Dendritic cell treated with granulocyte-macrophage colony-stimulating factor and Interleukin-4, amounts not matched to agents 40 ng/mL and 50 ng/mL, for 4 days (primary cell): ENCODE measurements at regions of chr9 and their contacts with region 1.

Region 1: GRCh38 chr9:21326526-21327139 is 8.6 kb downstream of the KLHL9 start:
- H3K4me3 Mint-ChIP-seq: no peak overlapping the region
- H3K27ac Mint-ChIP-seq: no peak overlapping the region
- H3K4me1 Mint-ChIP-seq: peaks cover 43% of the 10 kb centered on the region
- H3K27me3 Mint-ChIP-seq: no peaks in the 10 kb centered on the region

Region 2: GRCh38 chr9:21205204-21205603 is 121.4 kb before region 1 on chr9:
- intact Hi-C with region 1: loop called (anchors 10 kb)
- H3K4me3 Mint-ChIP-seq: no peak overlapping the region
- H3K27ac Mint-ChIP-seq: no peak overlapping the region
- H3K4me1 Mint-ChIP-seq: peaks cover 8% of the 10 kb centered on the region
- H3K27me3 Mint-ChIP-seq: peaks cover 18% of the 10 kb centered on the region

Region 3: DNA sequence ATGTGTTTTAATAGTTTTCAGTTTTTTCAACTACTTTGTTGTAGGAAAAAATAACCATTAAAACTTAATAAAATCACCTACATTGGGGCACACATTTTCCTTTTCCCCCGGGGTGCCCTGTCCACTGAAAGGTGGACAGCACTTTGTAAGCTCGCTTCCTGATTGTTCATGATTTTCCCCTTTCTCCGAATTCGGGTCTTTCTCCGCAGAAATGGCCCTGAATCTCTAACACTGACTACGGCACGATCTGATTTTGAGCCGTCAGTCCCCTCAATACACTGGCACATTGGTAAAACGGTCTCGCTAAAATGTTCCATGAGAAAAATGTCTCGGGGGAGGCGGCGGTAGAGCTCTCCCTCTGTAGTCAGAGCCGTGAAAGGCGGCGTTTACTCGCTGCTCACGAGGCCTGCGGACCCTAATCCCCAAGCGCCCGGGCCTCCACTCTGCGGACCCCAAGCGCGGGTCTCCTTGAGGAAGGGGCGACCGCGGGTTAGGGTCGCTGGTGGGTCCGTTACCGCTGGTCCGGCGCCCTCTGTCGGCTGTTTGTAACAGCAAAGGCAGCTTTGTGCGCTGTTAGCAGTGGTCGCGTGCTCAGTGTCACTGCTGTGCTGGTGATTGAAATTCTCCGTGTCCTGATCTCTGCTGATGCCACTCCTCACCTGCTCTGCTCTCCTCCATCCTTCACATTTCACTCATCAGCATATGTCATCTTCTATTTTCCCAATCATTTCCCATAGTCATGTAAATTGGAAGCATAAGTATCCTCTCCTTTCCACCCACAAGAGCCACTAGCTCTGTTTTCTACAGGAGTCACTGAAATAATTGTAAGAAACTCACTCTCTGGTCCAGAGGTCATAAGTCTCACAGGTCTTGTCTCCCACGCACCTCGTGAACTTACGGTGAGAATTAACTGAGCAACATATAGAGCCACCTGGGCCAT is 69.4 kb after region 1 on chr9:
- intact Hi-C with region 1: loop called (anchors 1 kb)
- H3K4me3 Mint-ChIP-seq: peak overlapping the region; percentile 68
- H3K27ac Mint-ChIP-seq: no peak overlapping the region
- H3K4me1 Mint-ChIP-seq: peaks cover 10% of the 10 kb centered on the region
- H3K27me3 Mint-ChIP-seq: peaks cover 71% of the 10 kb centered on the region

Region 4: DNA sequence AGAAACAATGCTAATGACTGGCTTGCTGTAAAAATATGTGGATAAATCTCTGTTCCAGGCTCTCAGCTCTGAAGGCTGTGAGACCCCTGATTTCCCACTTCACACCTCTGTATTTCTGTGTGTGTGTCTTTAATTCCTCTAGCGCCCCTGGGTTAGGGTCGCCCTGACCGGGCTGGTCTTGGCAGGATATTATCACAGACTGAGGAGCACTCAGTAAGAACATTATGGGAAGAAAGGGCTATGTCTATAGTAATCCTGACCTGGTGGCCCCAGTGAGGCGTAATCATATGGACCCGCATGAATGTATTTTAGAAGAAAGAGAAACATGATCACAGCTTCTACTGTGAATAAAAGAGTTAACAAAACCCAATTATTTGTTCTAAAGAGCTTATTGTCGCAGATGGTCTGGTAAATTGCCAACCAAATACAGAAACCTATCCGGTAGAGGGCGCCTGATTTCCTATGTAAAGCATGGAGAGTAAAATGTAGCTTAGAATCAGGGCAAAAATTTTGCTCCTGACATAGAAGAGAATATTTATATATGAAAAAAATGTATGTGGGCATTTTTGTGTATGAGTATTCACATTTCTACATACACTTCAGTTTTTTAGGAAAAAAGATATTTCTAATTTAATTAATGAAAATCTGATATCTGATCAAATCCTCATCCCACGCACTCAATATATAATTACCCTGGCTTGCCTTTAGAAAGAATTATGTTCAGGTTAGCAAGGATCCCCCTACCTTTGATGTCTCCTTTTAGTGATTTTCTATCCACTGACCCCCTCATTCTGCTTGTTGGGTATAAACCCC is 107.8 kb after region 1 on chr9:
- intact Hi-C with region 1: loop called (anchors 10 kb)
- H3K4me3 Mint-ChIP-seq: no peak overlapping the region
- H3K27ac Mint-ChIP-seq: no peak overlapping the region
- H3K4me1 Mint-ChIP-seq: peaks cover 16% of the 10 kb centered on the region
- H3K27me3 Mint-ChIP-seq: peaks cover 55% of the 10 kb centered on the region

Region 5: DNA sequence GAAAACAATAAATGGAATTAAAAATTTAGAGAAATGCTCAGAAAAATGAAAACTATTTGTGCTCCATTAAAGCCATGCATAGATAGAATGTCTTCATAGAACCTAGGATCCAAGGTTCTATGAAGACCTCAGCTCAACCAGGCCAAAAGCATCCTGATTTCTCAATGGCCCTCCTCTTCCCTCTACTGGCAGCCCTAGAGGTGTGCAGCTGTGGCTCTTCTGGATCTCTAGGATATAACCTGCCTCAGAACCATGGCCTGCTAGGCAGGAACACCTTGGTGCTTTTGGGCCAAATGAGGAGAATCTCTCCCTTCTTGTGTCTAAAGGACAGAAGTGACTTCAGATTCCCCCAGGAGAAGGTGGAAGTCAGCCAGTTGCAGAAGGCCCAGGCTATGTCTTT is 128.7 kb after region 1 on chr9:
- intact Hi-C with region 1: loop called (anchors 5 kb)
- H3K4me3 Mint-ChIP-seq: no peak overlapping the region
- H3K27ac Mint-ChIP-seq: no peak overlapping the region
- H3K4me1 Mint-ChIP-seq: no peaks in the 10 kb centered on the region
- H3K27me3 Mint-ChIP-seq: peaks cover 24% of the 10 kb centered on the region